ENCODE measurements at regions of chr18 and their contacts with region 1.

Region 1: GRCh38 chr18:10928772-10929373 is 220.5 kb downstream of the PIEZO2 start:
- DNase-seq: no peak
- ATAC-seq: no peak
- H3K4me3 ChIP-seq: no peak overlapping the region
- H3K4me3 Mint-ChIP-seq: no peak overlapping the region
- H3K27ac ChIP-seq: no peak overlapping the region
- H3K27ac Mint-ChIP-seq: no peak overlapping the region
- H3K4me1 ChIP-seq: no peaks in the 10 kb centered on the region
- H3K4me1 Mint-ChIP-seq: no peaks in the 10 kb centered on the region
- H3K27me3 ChIP-seq: peaks cover 0 to 2% of the 10 kb centered on the region in 2 experiments
- H3K27me3 Mint-ChIP-seq: no peaks in the 10 kb centered on the region
- CTCF ChIP-seq: no peak

Region 2: DNA sequence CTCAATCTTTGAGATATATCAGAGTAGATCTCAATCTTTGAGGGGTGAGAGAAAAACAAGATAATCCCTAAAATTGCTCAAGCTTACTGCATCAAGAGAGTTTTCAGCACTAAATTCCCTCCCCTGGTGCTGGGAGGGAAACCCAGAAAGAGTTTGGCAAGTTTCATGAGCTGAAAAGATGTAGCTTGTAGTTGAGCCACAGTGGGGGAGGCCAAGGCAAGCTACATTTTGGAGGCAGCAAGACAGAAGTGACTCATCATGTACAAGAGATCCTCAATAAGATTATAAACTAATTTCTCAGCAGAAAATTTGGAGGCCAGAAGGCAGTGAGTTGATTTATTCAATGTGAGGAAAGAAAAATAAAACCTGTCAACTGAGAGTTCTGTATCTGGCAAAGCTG is 87.7 kb before region 1 on chr18:
- CTCF ChIA-PET with region 1: no interaction called
- POLR2A ChIA-PET with region 1: no interaction called
- intact Hi-C with region 1: no loop called
- DNase-seq: no peak
- ATAC-seq: no peak
- H3K4me3 ChIP-seq: no peak overlapping the region
- H3K4me3 Mint-ChIP-seq: no peak overlapping the region
- H3K27ac ChIP-seq: no peak overlapping the region
- H3K27ac Mint-ChIP-seq: no peak overlapping the region
- H3K4me1 ChIP-seq: no peaks in the 10 kb centered on the region
- H3K4me1 Mint-ChIP-seq: no peaks in the 10 kb centered on the region
- H3K27me3 ChIP-seq: no peaks in the 10 kb centered on the region
- H3K27me3 Mint-ChIP-seq: peaks cover 10% of the 10 kb centered on the region
- CTCF ChIP-seq: no peak

Region 3: DNA sequence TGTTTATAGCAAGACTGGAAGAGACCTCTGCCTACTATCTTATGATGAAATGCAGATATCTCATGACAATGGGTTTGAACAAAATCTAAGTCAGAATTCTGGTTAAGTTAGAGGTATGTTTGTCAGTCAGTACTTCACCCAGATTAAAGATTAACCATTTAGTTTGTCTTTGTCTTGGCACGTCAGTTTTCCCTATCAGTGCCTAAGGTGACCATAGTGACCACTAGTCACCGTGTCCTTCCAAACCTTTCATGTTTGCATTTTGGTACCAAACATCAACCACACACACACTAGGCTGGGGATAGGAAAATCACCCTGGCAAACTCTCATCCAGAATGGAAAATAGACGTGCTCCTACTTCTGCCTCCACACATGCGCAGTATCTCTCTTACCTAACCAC is 28.4 kb before region 1 on chr18:
- CTCF ChIA-PET with region 1: no interaction called
- POLR2A ChIA-PET with region 1: no interaction called
- intact Hi-C with region 1: no loop called
- DNase-seq: no peak
- ATAC-seq: no peak
- H3K4me3 ChIP-seq: no peak overlapping the region
- H3K4me3 Mint-ChIP-seq: no peak overlapping the region
- H3K27ac ChIP-seq: no peak overlapping the region
- H3K27ac Mint-ChIP-seq: no peak overlapping the region
- H3K4me1 ChIP-seq: no peaks in the 10 kb centered on the region
- H3K4me1 Mint-ChIP-seq: no peaks in the 10 kb centered on the region
- H3K27me3 ChIP-seq: no peaks in the 10 kb centered on the region
- H3K27me3 Mint-ChIP-seq: no peaks in the 10 kb centered on the region
- CTCF ChIP-seq: no peak

Region 4: GRCh38 chr18:10973567-10974203 is 44.8 kb after region 1 on chr18:
- CTCF ChIA-PET with region 1: no interaction called
- POLR2A ChIA-PET with region 1: no interaction called
- intact Hi-C with region 1: loop called in 1 of 2 experiments (anchors 10 kb)
- DNase-seq: no peak
- ATAC-seq: no peak
- H3K4me3 ChIP-seq: no peak overlapping the region
- H3K4me3 Mint-ChIP-seq: no peak overlapping the region
- H3K27ac ChIP-seq: no peak overlapping the region
- H3K27ac Mint-ChIP-seq: no peak overlapping the region
- H3K4me1 ChIP-seq: no peaks in the 10 kb centered on the region
- H3K4me1 Mint-ChIP-seq: no peaks in the 10 kb centered on the region
- H3K27me3 ChIP-seq: peaks cover 0 to 4% of the 10 kb centered on the region in 2 experiments
- H3K27me3 Mint-ChIP-seq: peaks cover 5% of the 10 kb centered on the region
- CTCF ChIP-seq: no peak

Measured in CD4-positive, alpha-beta T cell (primary cell).